Aorta (tissue), 5 donors: ENCODE measurements at regions of chr16 and their contacts with region 1.

Region 1: DNA sequence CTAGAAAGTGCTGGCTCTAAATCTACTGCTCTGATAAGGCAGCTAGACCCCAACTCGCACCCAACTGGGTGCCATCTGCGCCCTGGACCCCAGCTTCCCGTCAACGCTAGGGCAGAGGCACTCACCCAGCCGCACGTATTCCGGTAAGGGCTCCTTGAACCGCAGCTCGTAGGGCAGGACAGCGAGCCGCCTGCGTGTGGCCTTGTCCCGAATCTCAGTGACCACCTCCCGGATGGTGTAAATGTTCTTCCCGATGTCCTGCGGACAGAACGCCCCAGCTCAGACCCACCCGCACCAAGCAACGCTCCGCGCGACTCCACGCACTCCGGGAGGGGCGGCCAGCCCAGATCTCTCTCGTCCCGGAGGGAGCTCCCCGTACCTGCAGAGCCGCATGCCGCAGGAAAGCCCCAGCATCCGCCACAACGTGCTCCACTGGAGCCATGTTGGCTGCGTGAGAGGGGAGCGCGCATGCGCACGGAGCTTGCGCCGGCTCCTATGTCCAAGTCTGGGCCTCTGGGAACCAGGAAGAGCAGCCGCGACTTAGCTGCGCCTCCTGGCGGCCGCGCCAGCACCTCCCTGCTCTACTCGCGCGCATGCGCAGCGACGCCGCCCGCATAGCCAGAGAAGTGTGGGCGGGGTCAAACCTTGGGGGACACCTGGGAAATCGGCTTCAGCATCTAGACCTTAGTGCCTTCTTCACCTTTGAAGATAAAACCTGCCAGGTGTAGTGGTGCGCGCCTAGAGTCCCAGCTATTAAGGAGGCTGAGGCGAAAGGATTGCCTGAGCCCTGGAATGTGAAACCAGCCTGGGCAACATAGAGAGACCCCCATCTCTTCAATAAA is at the start of gene NOB1:
- DNase-seq: peak; percentile 98 to 99
- ATAC-seq: peak; percentile 100
- H3K4me3 ChIP-seq: peak within 1 kb of the TSS; percentile 12 to 74
- H3K27ac ChIP-seq: no peak within 1 kb of the TSS
- H3K4me1 ChIP-seq: peaks cover 0 to 3% of the 10 kb centered on the region in 2 donors
- H3K27me3 ChIP-seq: no peaks in the 10 kb centered on the region
- total RNA-seq, gene NOB1: 30.6 to 32.4 TPM

Region 2: GRCh38 chr16:69396187-69397061 is 358.3 kb before region 1 on chr16:
- intact Hi-C with region 1: loop called (anchors 2 to 5 kb)
- DNase-seq: peak in 1 of 2 donors; percentile 70
- ATAC-seq: peak; percentile 88
- H3K4me3 ChIP-seq: no peak overlapping the region
- H3K27ac ChIP-seq: peak overlapping the region in 1 of 2 donors; percentile 79
- H3K4me1 ChIP-seq: no peaks in the 10 kb centered on the region
- H3K27me3 ChIP-seq: no peaks in the 10 kb centered on the region

Region 3: GRCh38 chr16:69709456-69710084 is 45.1 kb before region 1 on chr16:
- intact Hi-C with region 1: loop called (anchors 1 to 2 kb)
- DNase-seq: no peak
- ATAC-seq: peak; percentile 75
- H3K4me3 ChIP-seq: no peak overlapping the region
- H3K27ac ChIP-seq: no peak overlapping the region
- H3K4me1 ChIP-seq: no peaks in the 10 kb centered on the region
- H3K27me3 ChIP-seq: no peaks in the 10 kb centered on the region

Region 4: GRCh38 chr16:69726296-69727060 is 28.2 kb before region 1 on chr16 and contains the start of gene NQO1:
- intact Hi-C with region 1: loop called in 1 of 2 experiments (anchors 2 kb)
- DNase-seq: peak; percentile 95 to 98
- ATAC-seq: peak; percentile 96
- H3K4me3 ChIP-seq: peak within 1 kb of the TSS; percentile 65 to 68
- H3K27ac ChIP-seq: peak within 1 kb of the TSS; percentile 21 to 53
- H3K4me1 ChIP-seq: peaks cover 0 to 3% of the 10 kb centered on the region in 2 donors
- H3K27me3 ChIP-seq: no peaks in the 10 kb centered on the region
- total RNA-seq, gene NQO1: 31.3 to 52.5 TPM

Region 5: GRCh38 chr16:69796351-69797118 is 41.8 kb after region 1 on chr16:
- intact Hi-C with region 1: no loop called
- DNase-seq: no peak
- ATAC-seq: peak; percentile 90
- H3K4me3 ChIP-seq: no peak overlapping the region
- H3K27ac ChIP-seq: no peak overlapping the region
- H3K4me1 ChIP-seq: no peaks in the 10 kb centered on the region
- H3K27me3 ChIP-seq: no peaks in the 10 kb centered on the region

Region 6: GRCh38 chr16:69839798-69840409 is 85.2 kb after region 1 on chr16:
- intact Hi-C with region 1: no loop called
- DNase-seq: no peak
- ATAC-seq: peak; percentile 58
- H3K4me3 ChIP-seq: no peak overlapping the region
- H3K27ac ChIP-seq: peak overlapping the region; percentile 86 to 94
- H3K4me1 ChIP-seq: peaks cover 3 to 7% of the 10 kb centered on the region in 2 donors
- H3K27me3 ChIP-seq: no peaks in the 10 kb centered on the region